Naive thymus-derived CD4-positive, alpha-beta T cell (primary cell): ENCODE measurements at regions of chr1 and their contacts with region 1.

Region 1: GRCh38 chr1:67685067-67685557 is at the start of gene GADD45A:
- DNase-seq: peak; percentile 80 to 96 (median 94)
- ATAC-seq: peak; percentile 93
- H3K4me3 ChIP-seq: peak within 1 kb of the TSS; percentile 69
- H3K4me3 Mint-ChIP-seq: peak within 1 kb of the TSS; percentile 90 to 99 (median 98)
- H3K27ac ChIP-seq: peak within 1 kb of the TSS; percentile 59
- H3K27ac Mint-ChIP-seq: peak within 1 kb of the TSS; percentile 77 to 98 (median 93)
- H3K4me1 ChIP-seq: peaks cover 9 to 16% of the 10 kb centered on the region in 2 donors
- H3K4me1 Mint-ChIP-seq: peaks cover 20 to 42% (median 26%) of the 10 kb centered on the region in 7 donors
- H3K27me3 ChIP-seq: no peaks in the 10 kb centered on the region
- H3K27me3 Mint-ChIP-seq: no peaks in the 10 kb centered on the region
- total RNA-seq, gene GADD45A: 15.0 to 70.4 (median 24.2) TPM

Region 2: GRCh38 chr1:67174716-67175284 is 510.3 kb before region 1 on chr1:
- CTCF ChIA-PET with region 1: no interaction called
- POLR2A ChIA-PET with region 1: no interaction called
- intact Hi-C with region 1: loop called in 1 of 2 experiments (anchors 5 kb)
- DNase-seq: no peak
- ATAC-seq: no peak
- H3K4me3 ChIP-seq: no peak overlapping the region
- H3K4me3 Mint-ChIP-seq: peak overlapping the region in 1 of 10 donors; percentile 15
- H3K27ac ChIP-seq: no peak overlapping the region
- H3K27ac Mint-ChIP-seq: peak overlapping the region in 1 of 9 donors; percentile 60
- H3K4me1 ChIP-seq: peaks cover 29 to 32% of the 10 kb centered on the region in 2 donors
- H3K4me1 Mint-ChIP-seq: peaks cover 43 to 66% (median 53%) of the 10 kb centered on the region in 7 donors
- H3K27me3 ChIP-seq: no peaks in the 10 kb centered on the region
- H3K27me3 Mint-ChIP-seq: peaks cover 0 to 4% (median 0%) of the 10 kb centered on the region in 5 donors

Region 3: GRCh38 chr1:67261680-67262079 is 423.4 kb before region 1 on chr1:
- CTCF ChIA-PET with region 1: no interaction called
- POLR2A ChIA-PET with region 1: no interaction called
- intact Hi-C with region 1: loop called in 1 of 2 experiments (anchors 1 kb)
- DNase-seq: peak in 8 of 9 donors; percentile 24 to 67 (median 57)
- ATAC-seq: peak; percentile 52
- H3K4me3 ChIP-seq: no peak overlapping the region
- H3K4me3 Mint-ChIP-seq: peak overlapping the region in 7 of 10 donors; percentile 17 to 73 (median 34)
- H3K27ac ChIP-seq: no peak overlapping the region
- H3K27ac Mint-ChIP-seq: peak overlapping the region in 1 of 9 donors; percentile 8
- H3K4me1 ChIP-seq: peaks cover 17 to 22% of the 10 kb centered on the region in 2 donors
- H3K4me1 Mint-ChIP-seq: peaks cover 12 to 44% (median 31%) of the 10 kb centered on the region in 7 donors
- H3K27me3 ChIP-seq: no peaks in the 10 kb centered on the region
- H3K27me3 Mint-ChIP-seq: no peaks in the 10 kb centered on the region

Region 4: DNA sequence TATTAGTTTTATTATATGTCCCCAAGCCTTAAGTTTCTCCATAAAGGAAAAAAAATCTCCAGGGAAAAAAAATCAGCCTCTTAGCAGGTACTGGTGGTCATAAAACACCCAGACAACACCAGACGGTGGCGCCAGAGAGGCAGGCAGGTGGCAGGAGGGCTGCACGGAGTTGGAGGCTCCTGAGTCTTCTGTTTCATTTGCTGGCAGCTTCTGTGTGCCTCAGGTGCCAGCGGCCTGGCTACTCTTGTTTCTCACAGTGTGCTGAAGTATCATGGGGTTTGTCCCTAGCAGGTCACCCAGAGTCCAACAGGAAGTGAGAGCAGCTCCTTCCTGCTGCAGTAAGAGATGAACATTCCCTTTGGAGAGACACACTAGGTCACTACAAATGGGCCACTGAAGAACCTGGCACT is 123.4 kb before region 1 on chr1:
- CTCF ChIA-PET with region 1: no interaction called
- POLR2A ChIA-PET with region 1: no interaction called
- intact Hi-C with region 1: loop called in 1 of 2 experiments (anchors 1 kb)
- DNase-seq: peak; percentile 51 to 84 (median 70)
- ATAC-seq: peak; percentile 80
- H3K4me3 ChIP-seq: no peak overlapping the region
- H3K4me3 Mint-ChIP-seq: no peak overlapping the region
- H3K27ac ChIP-seq: no peak overlapping the region
- H3K27ac Mint-ChIP-seq: no peak overlapping the region
- H3K4me1 ChIP-seq: no peaks in the 10 kb centered on the region
- H3K4me1 Mint-ChIP-seq: peaks cover 0 to 3% (median 0%) of the 10 kb centered on the region in 7 donors
- H3K27me3 ChIP-seq: no peaks in the 10 kb centered on the region
- H3K27me3 Mint-ChIP-seq: peaks cover 0 to 15% (median 5%) of the 10 kb centered on the region in 5 donors

Region 5: DNA sequence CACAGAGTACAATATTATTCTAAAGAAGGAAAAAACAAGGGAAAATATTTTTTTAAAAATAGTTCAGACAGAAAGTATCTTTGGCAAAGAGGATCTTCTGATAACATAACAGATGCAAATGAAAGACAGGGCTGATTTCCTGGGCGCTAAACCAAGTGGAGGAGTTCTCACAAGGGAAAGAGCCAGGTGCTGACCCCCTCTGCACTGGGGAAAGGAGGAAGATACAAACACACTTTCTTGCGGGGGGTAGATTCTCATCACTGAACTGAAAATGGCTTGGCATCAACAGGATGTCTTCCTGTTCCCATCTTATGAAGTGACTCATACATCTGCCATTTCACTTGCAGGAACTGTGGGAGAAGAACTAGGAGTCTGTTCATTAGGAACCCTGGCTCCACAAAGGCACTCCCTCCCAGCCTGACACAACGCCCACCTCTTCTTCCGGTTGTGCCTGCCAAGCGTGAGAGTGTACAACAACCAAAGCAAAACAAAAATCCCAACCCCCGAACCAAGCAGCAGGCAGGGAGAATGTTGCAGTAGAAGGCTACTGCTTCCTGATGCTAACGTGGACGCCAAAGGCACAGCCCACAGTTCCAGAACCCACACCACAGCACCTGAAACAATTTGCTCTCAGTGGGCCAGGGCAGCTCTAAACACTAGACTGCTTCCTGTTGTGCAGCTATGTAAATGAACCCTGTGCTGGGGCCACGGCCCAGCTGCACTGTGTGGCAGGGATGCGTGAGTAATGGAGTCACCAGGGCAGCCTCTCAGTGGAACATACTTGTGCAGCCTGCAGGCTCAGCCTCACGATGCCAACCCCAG is 50.9 kb after region 1 on chr1:
- CTCF ChIA-PET with region 1: no interaction called
- POLR2A ChIA-PET with region 1: interaction called, 11 read pairs
- intact Hi-C with region 1: loop called (anchors 1 to 2 kb)
- DNase-seq: peak in 8 of 9 donors; percentile 7 to 42 (median 30)
- ATAC-seq: peak; percentile 84
- H3K4me3 ChIP-seq: peak overlapping the region; percentile 35
- H3K4me3 Mint-ChIP-seq: peak overlapping the region; percentile 57 to 90 (median 78)
- H3K27ac ChIP-seq: peak overlapping the region; percentile 22
- H3K27ac Mint-ChIP-seq: peak overlapping the region; percentile 67 to 94 (median 90)
- H3K4me1 ChIP-seq: peaks cover 7 to 11% of the 10 kb centered on the region in 2 donors
- H3K4me1 Mint-ChIP-seq: peaks cover 14 to 26% (median 23%) of the 10 kb centered on the region in 7 donors
- H3K27me3 ChIP-seq: no peaks in the 10 kb centered on the region
- H3K27me3 Mint-ChIP-seq: peaks cover 0 to 5% (median 0%) of the 10 kb centered on the region in 5 donors

Region 6: DNA sequence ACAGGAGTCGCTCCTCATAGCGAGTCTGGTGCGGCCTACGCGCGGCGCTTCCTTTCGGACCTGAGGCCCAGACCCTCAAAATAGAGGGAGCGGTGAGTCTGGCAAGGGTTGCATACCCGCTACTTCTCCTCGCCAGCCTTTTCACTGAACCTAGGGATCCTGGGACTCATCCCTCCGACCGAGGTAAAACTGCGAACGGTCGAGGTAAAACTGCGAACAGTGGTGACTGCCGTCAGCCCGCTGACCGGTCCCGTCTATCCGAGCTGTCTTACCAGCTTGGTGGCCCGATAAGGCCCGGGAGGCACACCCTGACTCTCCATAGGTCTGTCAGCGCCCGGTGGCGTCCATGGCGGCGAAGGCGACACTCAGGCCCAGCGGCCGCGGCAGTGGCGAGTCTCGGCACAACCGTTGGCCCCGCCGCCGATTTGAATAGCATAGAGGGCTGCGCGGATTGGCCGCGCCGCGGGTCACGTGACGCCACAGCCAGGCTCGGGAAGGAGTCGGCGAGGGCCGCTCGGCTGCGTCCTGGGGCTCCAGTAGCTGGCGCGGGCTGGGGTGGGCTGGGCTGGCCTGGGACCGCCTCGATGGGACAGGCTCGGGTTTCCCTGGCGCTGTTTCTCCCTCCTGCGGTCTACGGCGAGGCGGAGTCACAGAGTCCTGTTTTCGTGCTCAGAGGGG is 811.7 kb after region 1 on chr1 and contains the start of gene DEPDC1:
- CTCF ChIA-PET with region 1: no interaction called
- POLR2A ChIA-PET with region 1: no interaction called
- intact Hi-C with region 1: loop called in 1 of 2 experiments (anchors 2 kb)
- DNase-seq: peak; percentile 10 to 91 (median 42)
- ATAC-seq: peak; percentile 94
- H3K4me3 ChIP-seq: peak within 1 kb of the TSS; percentile 70
- H3K4me3 Mint-ChIP-seq: peak within 1 kb of the TSS; percentile 68 to 94 (median 81)
- H3K27ac ChIP-seq: no peak within 1 kb of the TSS
- H3K27ac Mint-ChIP-seq: peak within 1 kb of the TSS in 1 of 9 donors; percentile 87
- H3K4me1 ChIP-seq: peaks cover 0 to 5% of the 10 kb centered on the region in 2 donors
- H3K4me1 Mint-ChIP-seq: peaks cover 0 to 35% (median 13%) of the 10 kb centered on the region in 7 donors
- H3K27me3 ChIP-seq: no peaks in the 10 kb centered on the region
- H3K27me3 Mint-ChIP-seq: peaks cover 20 to 39% (median 25%) of the 10 kb centered on the region in 5 donors
- total RNA-seq, gene DEPDC1: 0.13 to 12.6 (median 0.24) TPM in 3 of 5 experiments, not detected in the others